ENCODE measurements at regions of chr21 and their contacts with region 1.

Region 1: GRCh38 chr21:41777951-41778874 is 11.4 kb upstream of the RIPK4 start:
- DNase-seq: no peak
- ATAC-seq: peak; percentile 85
- H3K4me3 ChIP-seq: no peak overlapping the region; a peak in 1 of 4 replicates
- H3K27ac ChIP-seq: peak overlapping the region; percentile 99
- H3K4me1 ChIP-seq: peaks cover 71% of the 10 kb centered on the region
- H3K27me3 ChIP-seq: no peaks in the 10 kb centered on the region
- CTCF ChIP-seq: peak; percentile 91

Region 2: DNA sequence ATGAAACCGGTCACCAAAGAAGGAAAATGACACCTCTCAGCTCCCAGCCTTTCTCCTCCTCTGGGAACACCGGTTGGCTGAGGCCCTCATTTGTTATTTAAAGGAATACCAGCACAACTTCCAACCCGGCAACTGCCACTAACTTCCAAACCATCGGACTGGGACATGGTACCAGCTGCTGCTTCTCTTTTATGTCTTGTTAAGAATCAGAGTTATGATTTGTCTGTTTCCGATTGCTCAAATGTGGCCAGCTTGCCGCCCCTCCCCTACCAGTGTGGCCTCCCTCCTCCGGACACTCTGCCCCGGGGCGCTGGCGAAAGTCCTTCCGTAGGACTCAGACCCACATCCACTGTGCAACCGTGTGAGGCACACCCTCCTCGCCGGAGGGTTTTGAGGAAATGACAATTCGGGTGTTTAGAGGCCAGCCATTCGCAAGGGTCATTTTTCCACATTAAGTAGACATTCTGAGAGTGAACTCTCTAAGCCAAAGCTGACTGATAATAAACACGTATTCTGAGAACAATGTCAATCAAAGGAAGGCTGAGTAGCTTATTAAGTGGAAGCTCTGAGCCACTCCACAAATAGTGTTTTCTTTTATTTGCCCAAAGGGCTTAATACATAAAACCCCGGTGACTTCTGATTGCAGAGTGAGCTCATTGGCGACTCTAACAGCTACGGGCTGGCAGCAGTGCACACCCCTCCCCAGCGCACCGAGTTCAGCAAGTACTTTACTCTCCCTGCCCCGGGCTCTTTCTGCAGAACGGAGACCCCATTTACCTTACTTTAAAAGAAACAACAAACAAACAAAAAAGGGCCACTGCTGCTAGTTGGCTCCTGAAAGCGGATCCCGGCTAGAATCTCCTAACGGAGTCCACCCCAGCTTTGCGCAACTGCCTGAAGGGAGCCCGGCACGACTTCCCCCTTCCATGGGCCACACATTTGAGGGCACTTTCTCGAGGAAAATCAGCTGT is 16.7 kb before region 1 on chr21:
- CTCF ChIA-PET with region 1: interaction called, 3 read pairs
- POLR2A ChIA-PET with region 1: interaction called, 30 read pairs
- in situ Hi-C with region 1: no loop called
- intact Hi-C with region 1: no loop called
- DNase-seq: no peak
- ATAC-seq: peak; percentile 24
- H3K4me3 ChIP-seq: peak overlapping the region; percentile 72 to 91
- H3K27ac ChIP-seq: peak overlapping the region; percentile 98
- H3K4me1 ChIP-seq: peaks cover 34% of the 10 kb centered on the region
- H3K27me3 ChIP-seq: no peaks in the 10 kb centered on the region
- CTCF ChIP-seq: no peak